Posterior vena cava (tissue), 2 donors: ENCODE measurements at regions of chr1 and their contacts with region 1.

Region 1: DNA sequence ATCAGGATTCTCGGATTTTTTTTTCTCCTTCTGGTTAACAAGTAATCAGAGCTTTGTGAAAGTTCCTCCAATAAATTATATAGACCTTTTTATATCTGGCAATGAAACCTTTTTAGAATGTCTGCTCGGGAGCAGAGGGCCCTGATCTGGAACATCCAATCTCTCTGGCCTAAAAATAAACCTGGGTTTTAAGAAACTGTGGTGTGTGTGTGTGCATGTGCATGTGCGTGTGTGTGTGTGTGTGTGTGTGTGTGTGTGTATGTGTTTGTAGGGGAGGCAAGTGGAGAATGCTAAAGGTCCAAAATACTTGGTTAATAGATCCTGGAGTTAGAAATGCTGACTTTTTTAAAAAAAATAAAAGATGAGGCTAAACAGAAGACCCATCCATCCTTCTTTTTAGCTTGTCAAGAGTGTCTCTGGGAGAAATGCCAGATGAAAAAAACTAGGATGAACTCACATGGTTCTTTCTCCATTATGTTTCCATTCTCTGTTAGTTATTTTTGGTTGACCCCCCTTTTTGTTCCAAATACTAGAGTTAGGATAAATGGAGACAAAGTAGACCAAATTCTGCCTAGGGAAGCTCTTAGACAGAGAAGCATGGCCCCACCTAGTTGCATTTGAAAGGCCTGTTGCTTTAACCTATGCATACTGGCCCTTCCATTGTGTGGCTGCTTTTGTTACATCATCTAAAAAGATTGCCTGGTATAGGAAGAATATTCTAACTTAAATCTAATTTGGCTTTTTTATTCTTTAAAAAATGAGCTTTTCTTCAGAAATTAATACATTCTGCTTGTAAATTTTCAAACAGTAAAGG is 175.9 kb downstream of the PAPPA2 start:
- DNase-seq: no peak

Region 2: GRCh38 chr1:176577646-176578197 is 61.2 kb before region 1 on chr1:
- intact Hi-C with region 1: loop called in 1 of 2 experiments (anchors 10 kb)
- DNase-seq: no peak